ENCODE measurements at regions of chr14 and their contacts with region 1.

Region 1: GRCh38 chr14:68392393-68393141 is 400.3 kb downstream of the ZFP36L1 start:
- DNase-seq: peak in 3 of 4 donors; percentile 76 to 84 (median 80)
- ATAC-seq: peak; percentile 46
- H3K4me3 ChIP-seq: no peak overlapping the region
- H3K27ac ChIP-seq: peak overlapping the region; percentile 65 to 74
- H3K4me1 ChIP-seq: peaks cover 25 to 61% of the 10 kb centered on the region in 2 donors
- H3K27me3 ChIP-seq: no peaks in the 10 kb centered on the region
- CTCF ChIP-seq: no peak

Region 2: GRCh38 chr14:67934008-67934481 is 458.5 kb before region 1 on chr14:
- intact Hi-C with region 1: loop called in 1 of 2 experiments (anchors 10 kb)
- DNase-seq: peak in 2 of 4 donors; percentile 78 to 86
- ATAC-seq: peak; percentile 97
- H3K4me3 ChIP-seq: no peak overlapping the region
- H3K27ac ChIP-seq: peak overlapping the region; percentile 2 to 8
- H3K4me1 ChIP-seq: peaks cover 0 to 24% of the 10 kb centered on the region in 2 donors
- H3K27me3 ChIP-seq: no peaks in the 10 kb centered on the region
- CTCF ChIP-seq: peak; percentile 59 to 68

Region 3: DNA sequence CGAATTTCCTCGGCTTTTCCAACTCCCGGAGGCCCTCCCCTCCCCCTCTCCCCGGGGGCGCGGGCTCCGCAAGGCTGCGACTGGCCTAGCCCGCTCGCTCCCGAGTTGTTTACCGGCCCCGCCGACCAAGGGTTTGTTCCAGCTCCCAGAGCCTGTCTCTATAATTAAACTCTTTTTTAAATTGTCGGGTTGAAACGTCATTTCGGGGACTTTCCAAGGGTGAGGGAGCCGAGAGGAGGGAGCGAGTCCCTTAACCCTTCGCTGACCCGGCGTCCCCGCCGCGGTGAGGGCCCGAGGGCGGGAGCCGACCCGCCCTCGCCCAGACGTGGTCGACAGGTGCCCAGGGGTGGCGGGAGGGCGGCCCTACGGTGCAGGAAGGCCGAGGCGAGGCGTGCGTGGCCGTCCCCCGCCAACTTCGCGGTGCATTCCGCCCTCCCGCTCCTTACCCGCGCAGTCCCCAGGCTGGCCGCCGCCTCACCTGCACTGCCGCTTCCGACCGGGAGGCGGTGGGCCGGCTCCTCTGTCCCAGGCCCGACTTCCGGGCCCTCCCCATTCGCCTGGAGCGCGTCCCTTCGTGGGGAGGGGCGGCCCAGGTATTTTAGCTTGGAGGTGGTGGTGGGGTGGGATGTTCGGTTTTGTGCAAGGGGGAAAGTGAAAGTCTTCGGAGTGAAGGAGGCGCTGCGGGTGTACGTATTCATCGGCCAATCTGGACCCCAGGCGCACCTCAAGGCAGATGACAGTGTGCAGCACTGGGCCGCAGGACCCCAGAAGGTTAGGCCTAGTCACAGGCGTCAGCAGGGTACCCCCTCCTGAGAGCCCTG is 403.2 kb after region 1 on chr14:
- intact Hi-C with region 1: loop called in 1 of 2 experiments (anchors 10 kb)
- DNase-seq: peak; percentile 82 to 94 (median 88)
- ATAC-seq: peak; percentile 51
- H3K4me3 ChIP-seq: peak overlapping the region; percentile 59 to 78
- H3K27ac ChIP-seq: peak overlapping the region; percentile 100
- H3K4me1 ChIP-seq: peaks cover 3 to 17% of the 10 kb centered on the region in 2 donors
- H3K27me3 ChIP-seq: no peaks in the 10 kb centered on the region
- CTCF ChIP-seq: peak; percentile 52 to 91